Activated CD4-positive, alpha-beta T cell treated with anti-CD3 and anti-CD28 coated beads, Interleukin-2, amount 10 ng/mL, durations not matched to agents 7 days and 5 days (primary cell): ENCODE measurements at regions of chr2 and their contacts with region 1.

Region 1: GRCh38 chr2:24241528-24241927 is 66.7 kb downstream of the FAM228A start:
- DNase-seq: no peak
- H3K4me3 Mint-ChIP-seq: no peak overlapping the region
- H3K27ac Mint-ChIP-seq: no peak overlapping the region
- H3K4me1 Mint-ChIP-seq: no peaks in the 10 kb centered on the region
- H3K27me3 Mint-ChIP-seq: no peaks in the 10 kb centered on the region

Region 2: GRCh38 chr2:24304098-24304497 is 62.6 kb after region 1 on chr2:
- CTCF ChIA-PET with region 1: no interaction called
- POLR2A ChIA-PET with region 1: interaction called, 13 read pairs
- DNase-seq: no peak
- H3K4me3 Mint-ChIP-seq: no peak overlapping the region
- H3K27ac Mint-ChIP-seq: no peak overlapping the region
- H3K4me1 Mint-ChIP-seq: no peaks in the 10 kb centered on the region
- H3K27me3 Mint-ChIP-seq: no peaks in the 10 kb centered on the region